Calu3 (cell line): ENCODE measurements at regions of chr17 and their contacts with region 1.

Region 1: DNA sequence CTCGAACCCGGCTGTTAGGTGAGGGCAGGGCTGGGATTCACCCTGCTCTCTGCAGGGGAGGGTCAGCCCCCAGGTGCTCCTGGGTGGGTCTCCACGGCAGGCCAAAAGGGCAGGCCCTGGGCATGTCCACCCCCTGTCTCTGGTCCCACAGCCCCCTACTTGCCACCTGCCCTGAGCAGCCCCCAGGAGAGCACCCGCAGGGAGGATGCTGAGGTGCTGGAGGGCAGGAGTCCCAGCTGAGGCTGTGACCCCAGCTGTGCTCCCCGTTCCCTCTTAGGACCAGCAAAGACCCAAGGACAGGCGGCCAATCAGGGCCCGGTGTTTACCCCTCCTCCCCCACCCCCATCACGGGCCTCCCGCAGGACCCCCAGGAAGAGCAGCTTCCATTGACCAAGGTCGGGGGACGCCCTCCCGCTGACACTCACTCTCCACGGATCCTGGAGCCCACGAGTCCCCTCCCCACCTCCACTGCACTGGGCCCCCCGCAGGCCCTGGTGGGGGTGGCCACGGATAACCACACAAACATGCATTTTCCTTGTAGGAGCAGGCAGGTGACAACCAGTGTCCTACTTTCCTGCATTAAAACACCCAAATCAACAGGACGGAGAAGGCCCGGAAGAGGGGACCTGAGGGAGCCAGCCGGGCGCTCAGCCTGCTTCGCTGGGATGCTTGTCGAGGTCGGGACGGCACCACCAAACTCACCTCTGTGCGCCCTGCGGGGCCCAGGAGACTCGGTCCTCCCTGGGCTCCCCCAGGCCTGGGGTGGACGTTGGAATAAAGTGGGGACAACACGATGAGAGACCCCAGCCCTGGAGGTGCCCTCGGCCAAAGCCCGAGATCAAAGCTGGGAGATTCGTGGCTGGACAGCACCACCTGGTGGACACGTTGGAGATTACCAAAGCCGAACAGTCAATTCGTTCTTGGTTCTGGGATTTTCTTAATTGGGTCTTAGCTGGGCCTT is 22.5 kb upstream of the ENPP7 start:
- DNase-seq: peak; percentile 69
- H3K4me3 Mint-ChIP-seq: no peak overlapping the region
- H3K27ac Mint-ChIP-seq: no peak overlapping the region
- H3K4me1 Mint-ChIP-seq: peaks cover 9% of the 10 kb centered on the region
- H3K27me3 Mint-ChIP-seq: peaks cover 50% of the 10 kb centered on the region
- CTCF ChIP-seq: peak; percentile 86

Region 2: DNA sequence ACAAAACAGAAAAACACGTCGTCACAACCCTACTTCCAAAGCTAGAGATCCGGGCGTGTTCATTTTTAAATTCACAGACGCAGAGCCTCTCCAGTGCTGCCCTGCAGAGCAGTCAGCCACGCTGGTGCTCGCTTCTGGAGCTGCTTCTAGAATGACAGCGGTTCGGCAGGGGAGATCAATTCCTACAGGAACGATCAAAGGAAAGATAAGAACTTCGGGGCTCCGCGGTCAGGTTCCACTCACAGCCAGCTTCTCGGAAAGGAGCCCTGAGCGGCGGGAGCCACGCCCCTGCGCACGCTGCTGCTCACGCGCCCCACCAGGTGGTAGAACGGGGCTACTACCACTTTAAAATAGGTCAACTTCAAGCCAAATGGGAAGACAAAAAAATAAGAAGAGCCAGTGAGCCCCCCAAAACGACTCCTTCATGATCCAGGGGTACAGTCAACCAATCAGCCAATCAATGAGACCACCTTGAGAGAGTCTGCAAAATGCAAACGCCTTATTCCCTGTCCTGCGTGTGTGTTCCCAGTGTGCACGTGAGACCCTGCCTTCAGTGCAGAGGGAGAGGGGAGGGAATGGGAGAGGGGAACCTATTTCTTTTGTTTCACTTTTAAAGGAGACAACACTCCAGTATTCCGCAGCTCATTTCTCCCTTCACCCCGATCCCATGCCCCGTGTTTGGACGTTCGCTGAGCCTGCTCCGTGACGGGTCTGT is 307.1 kb before region 1 on chr17:
- CTCF ChIA-PET with region 1: interaction called, 3 read pairs
- intact Hi-C with region 1: loop called (anchors 5 kb)
- DNase-seq: peak; percentile 77
- H3K4me3 Mint-ChIP-seq: no peak overlapping the region
- H3K27ac Mint-ChIP-seq: no peak overlapping the region
- H3K4me1 Mint-ChIP-seq: peaks cover 9% of the 10 kb centered on the region
- H3K27me3 Mint-ChIP-seq: peaks cover 33% of the 10 kb centered on the region
- CTCF ChIP-seq: peak; percentile 74

Region 3: DNA sequence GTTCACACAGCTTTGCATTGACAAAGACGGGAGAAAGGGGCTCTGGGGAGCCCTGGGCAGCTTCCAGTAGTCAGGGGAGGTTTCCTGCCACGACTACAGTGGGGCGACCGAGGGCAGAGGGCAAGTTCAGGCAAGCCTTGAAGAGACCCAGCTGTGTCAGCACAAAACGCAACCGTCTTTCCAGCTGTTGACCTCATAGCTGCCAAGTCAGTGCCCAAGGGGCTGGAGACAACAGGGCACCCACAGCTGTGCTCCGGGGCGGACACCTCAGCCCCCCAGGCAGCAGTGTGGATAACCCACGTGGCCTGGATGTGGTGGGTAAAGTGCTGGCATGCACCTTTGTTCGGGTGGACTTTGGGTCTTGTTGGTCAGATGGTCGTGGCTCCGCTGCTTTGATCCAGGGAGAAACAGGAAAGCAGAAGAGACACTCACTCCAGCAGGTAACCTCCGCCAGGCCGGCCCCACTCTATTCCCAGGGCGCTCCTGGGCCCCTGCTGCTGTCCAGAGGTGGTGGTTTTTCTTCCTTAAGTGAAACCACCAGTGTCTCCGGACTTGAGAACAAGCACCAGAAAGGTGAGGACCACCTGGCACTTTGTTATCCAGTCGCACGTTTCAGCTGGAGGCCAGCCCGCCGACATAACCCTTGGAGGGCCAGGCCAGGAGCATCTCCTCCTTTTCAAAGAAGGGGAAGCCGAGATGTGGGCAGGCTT is 52.1 kb after region 1 on chr17:
- CTCF ChIA-PET with region 1: no interaction called
- intact Hi-C with region 1: no loop called
- DNase-seq: no peak
- H3K4me3 Mint-ChIP-seq: no peak overlapping the region
- H3K27ac Mint-ChIP-seq: no peak overlapping the region
- H3K4me1 Mint-ChIP-seq: no peaks in the 10 kb centered on the region
- H3K27me3 Mint-ChIP-seq: peaks cover 14% of the 10 kb centered on the region
- CTCF ChIP-seq: no peak